ENCODE measurements at regions of chr1 and their contacts with region 1.

Region 1: DNA sequence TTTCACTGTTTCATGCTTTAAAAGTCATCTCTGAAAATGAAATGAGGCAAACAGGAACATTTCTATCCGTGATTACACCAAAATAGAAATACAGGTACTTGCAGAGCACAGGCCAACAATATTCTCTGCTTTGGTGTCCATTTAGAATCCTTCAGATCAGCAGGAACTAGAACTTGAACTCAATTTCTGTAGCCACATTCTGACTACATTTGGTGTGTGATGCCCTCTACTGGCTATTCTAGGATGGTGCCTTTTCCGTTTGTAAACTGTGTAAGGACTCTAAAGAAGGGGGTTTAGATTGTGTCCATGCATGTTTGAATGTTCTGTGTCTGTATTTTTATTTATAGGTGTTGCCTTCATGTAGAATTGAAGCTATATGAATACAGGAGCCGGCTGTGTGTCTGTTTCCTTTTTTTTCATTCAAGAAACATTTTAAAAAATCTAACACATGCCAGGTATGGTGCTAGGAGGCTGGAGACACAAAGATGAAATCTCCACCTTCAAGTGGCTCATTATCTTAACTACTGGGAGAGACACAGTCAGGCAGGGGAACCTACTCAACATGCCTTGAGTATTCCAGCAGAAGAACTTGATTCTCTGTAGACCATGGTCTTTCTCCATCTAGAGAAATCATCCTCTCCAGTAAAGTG is 7.6 kb upstream of the ZNF326 start:
- DNase-seq: no peak
- H3K4me3 ChIP-seq: no peak overlapping the region
- H3K27ac ChIP-seq: no peak overlapping the region
- H3K4me1 ChIP-seq: peaks cover 0 to 15% (median 3%) of the 10 kb centered on the region in 6 donors
- H3K27me3 ChIP-seq: no peaks in the 10 kb centered on the region
- CTCF ChIP-seq: peak; percentile 76 to 91 (median 88)
- POLR2A ChIP-seq: no peak

Region 2: DNA sequence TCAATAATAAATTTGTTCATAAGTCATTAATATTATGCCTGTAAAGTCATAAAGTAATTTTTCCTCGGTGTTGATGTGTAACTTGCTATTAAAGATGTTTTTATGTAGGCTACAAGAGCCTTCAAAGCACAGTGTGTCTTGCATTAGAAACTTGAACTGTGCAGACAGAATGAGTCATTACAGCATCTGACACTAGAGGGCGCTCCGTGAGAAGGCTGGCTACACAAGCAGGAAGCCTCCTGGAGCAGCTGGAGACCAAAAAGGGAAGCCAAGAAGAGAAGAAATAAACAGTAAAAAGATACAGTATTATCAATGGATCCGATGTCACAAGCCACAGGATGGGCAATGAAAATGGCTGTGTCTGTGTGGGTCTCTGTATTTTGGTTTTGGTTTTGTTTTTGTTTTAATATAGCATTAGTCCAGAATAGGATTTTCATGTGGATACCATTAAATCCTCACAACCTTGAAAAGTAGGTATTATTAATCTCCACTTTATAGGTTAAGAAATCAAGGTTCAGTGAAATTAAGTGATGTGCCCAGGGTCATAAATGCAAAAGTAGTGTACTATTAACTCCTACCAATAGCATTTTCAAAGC is 182.6 kb before region 1 on chr1:
- intact Hi-C with region 1: loop called (anchors 2 kb)
- DNase-seq: peak; percentile 93
- H3K4me3 ChIP-seq: peak overlapping the region in 1 of 8 donors; percentile 9
- H3K27ac ChIP-seq: no peak overlapping the region
- H3K4me1 ChIP-seq: peaks cover 0 to 14% (median 7%) of the 10 kb centered on the region in 6 donors
- H3K27me3 ChIP-seq: no peaks in the 10 kb centered on the region
- CTCF ChIP-seq: peak; percentile 79 to 92 (median 88)
- POLR2A ChIP-seq: no peak